CD4-positive, alpha-beta memory T cell (primary cell): ENCODE measurements at regions of chr11 and their contacts with region 1.

Region 1: DNA sequence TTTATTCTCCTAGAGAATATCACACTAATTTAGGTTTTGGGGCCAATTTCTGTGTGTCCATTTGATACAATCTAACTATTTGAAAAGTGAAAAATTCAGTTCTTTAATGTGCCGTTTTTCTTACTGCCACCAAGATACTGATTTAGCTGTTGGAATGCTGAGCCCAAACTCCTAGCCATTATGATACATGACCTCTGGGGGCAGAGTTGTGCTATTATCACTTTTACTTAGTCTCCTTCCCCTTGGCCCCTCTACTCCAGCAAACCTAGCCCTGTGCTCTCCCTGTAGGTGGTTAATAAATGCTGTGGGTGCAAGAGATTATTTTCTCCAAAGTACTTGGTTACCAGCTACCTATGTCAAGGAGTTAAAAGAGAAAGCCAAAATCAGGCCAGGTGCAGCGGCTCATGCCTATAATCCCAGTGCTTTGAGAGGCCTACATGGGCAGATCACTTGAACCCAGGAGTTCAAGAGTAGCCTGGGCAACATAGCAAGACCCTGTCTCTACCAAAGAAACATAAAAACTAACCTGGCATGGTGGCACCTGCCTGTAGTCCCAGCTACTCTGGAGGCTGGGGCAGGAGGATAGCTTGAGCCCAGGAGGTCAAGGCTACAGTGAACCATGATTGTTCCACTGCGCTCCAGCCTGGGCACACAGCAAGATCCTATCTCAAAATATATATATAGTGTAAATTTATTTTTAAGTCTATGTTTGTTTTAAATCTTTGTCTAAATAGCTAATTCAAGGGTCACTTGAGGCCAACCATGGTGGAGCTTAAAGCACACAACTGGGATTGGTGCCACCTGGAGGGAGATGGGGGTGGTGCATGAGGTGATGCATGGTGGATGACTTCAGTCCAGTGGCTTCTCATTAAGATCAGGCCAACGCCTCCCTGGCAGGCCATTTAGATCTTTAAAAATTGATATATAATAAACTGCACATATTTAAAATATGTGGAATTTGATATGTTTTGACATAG is 193.2 kb upstream of the PLET1 start:
- DNase-seq: peak in 4 of 5 donors; percentile 5 to 13 (median 10)
- H3K4me3 ChIP-seq: no peak overlapping the region
- H3K4me3 Mint-ChIP-seq: no peak overlapping the region
- H3K27ac ChIP-seq: no peak overlapping the region
- H3K27ac Mint-ChIP-seq: no peak overlapping the region
- H3K4me1 ChIP-seq: no peaks in the 10 kb centered on the region
- H3K4me1 Mint-ChIP-seq: peaks cover 0 to 5% (median 3%) of the 10 kb centered on the region in 4 donors
- H3K27me3 ChIP-seq: no peaks in the 10 kb centered on the region
- H3K27me3 Mint-ChIP-seq: peaks cover 2 to 3% of the 10 kb centered on the region in 2 donors

Region 2: DNA sequence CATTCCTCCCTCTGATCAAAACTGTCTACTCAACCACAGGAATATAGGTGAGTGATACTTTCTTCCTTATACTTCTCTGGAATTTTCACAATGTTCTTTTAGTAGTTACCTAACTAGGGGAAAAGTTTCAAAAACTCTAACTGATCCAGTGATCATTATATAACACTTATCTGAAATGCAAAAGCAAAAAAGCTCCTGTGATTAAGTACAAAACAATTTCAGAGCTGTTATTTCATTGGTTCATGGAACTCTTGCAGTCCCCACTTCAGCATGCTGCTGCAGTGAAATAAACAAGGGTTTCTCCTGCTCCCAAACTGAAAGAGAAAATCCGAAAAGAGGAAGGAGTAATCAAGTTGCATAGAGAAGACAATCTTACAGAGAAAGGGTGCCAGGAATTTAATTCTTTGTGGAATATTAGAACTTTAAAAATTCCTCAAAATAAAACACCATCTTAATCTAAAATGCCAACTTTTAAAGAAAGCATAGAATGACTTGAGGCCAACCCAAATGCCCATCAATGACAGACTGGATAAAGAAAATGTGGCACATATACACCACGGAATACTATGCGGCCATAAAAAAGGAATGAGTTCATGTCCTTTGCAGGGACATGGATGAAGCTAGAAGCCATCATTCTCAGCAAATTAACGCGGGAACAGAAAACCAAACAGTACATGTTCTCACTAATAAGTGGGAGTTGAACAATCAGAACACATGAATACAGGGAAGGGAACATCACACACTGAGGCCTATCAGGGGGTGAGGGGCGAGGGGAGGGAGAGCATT is 708.0 kb before region 1 on chr11:
- CTCF ChIA-PET with region 1: no interaction called
- POLR2A ChIA-PET with region 1: no interaction called
- intact Hi-C with region 1: no loop called
- DNase-seq: no peak
- H3K4me3 ChIP-seq: no peak overlapping the region
- H3K4me3 Mint-ChIP-seq: no peak overlapping the region
- H3K27ac ChIP-seq: no peak overlapping the region
- H3K27ac Mint-ChIP-seq: peak overlapping the region in 2 of 7 donors; percentile 19 to 37
- H3K4me1 ChIP-seq: no peaks in the 10 kb centered on the region
- H3K4me1 Mint-ChIP-seq: peaks cover 0 to 13% (median 0%) of the 10 kb centered on the region in 4 donors
- H3K27me3 ChIP-seq: no peaks in the 10 kb centered on the region
- H3K27me3 Mint-ChIP-seq: no peaks in the 10 kb centered on the region

Region 3: GRCh38 chr11:112289588-112290492 is 164.0 kb before region 1 on chr11:
- CTCF ChIA-PET with region 1: interaction called, 26 read pairs
- POLR2A ChIA-PET with region 1: interaction called, 3 read pairs
- intact Hi-C with region 1: loop called (anchors 1 kb)
- DNase-seq: peak; percentile 83 to 87 (median 86)
- H3K4me3 ChIP-seq: peak overlapping the region in 1 of 2 donors; percentile 35
- H3K4me3 Mint-ChIP-seq: peak overlapping the region; percentile 74 to 90 (median 86)
- H3K27ac ChIP-seq: peak overlapping the region; percentile 50
- H3K27ac Mint-ChIP-seq: peak overlapping the region; percentile 43 to 88 (median 73)
- H3K4me1 ChIP-seq: peaks cover 19% of the 10 kb centered on the region
- H3K4me1 Mint-ChIP-seq: peaks cover 11 to 34% (median 23%) of the 10 kb centered on the region in 4 donors
- H3K27me3 ChIP-seq: no peaks in the 10 kb centered on the region
- H3K27me3 Mint-ChIP-seq: no peaks in the 10 kb centered on the region

Region 4: DNA sequence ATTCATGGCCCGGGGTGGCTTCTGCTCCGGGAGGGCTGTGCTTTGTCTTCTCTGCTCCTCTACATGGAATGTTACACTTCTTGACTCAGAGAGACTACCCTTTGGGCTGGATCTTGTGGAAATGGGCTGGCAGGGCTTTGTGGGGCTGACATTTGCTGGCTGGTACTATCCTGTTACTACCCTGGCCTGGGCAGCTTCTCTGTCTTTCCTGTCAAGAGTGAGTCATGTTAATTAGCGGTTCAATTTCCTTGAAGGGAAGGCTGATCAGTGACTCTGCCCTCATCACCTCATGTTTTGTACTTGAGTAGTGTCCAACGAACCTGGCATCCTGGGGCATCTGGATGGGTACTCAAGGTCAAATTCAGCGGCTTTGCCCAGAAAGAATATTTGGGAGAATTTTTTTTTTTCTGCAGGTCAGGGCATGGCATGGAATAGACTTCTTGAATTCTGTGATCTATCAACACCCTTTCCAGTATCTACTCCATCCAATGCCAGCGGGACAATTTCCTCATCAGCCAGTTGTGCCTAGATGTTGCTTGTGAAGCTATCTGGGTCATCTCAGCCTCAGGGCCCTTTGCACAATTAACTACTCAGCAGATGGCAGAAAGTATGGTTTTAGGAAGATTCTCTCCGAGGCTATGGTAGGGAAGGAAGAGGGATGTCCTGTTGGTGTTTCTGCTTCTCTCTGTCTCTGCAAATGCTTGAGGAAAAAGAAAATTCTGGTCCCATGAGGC is 52.7 kb before region 1 on chr11:
- CTCF ChIA-PET with region 1: no interaction called
- POLR2A ChIA-PET with region 1: no interaction called
- intact Hi-C with region 1: no loop called
- DNase-seq: no peak
- H3K4me3 ChIP-seq: no peak overlapping the region
- H3K4me3 Mint-ChIP-seq: no peak overlapping the region
- H3K27ac ChIP-seq: no peak overlapping the region
- H3K27ac Mint-ChIP-seq: no peak overlapping the region
- H3K4me1 ChIP-seq: no peaks in the 10 kb centered on the region
- H3K4me1 Mint-ChIP-seq: no peaks in the 10 kb centered on the region
- H3K27me3 ChIP-seq: no peaks in the 10 kb centered on the region
- H3K27me3 Mint-ChIP-seq: peaks cover 1 to 3% of the 10 kb centered on the region in 2 donors